ENCODE measurements at regions of chr3 and their contacts with region 1.

Region 1: GRCh38 chr3:10964537-10965167 is 27.9 kb upstream of the SLC6A1 start:
- DNase-seq: no peak
- H3K4me3 ChIP-seq: no peak overlapping the region
- CTCF ChIP-seq: no peak
- POLR2A ChIP-seq: no peak

Region 2: DNA sequence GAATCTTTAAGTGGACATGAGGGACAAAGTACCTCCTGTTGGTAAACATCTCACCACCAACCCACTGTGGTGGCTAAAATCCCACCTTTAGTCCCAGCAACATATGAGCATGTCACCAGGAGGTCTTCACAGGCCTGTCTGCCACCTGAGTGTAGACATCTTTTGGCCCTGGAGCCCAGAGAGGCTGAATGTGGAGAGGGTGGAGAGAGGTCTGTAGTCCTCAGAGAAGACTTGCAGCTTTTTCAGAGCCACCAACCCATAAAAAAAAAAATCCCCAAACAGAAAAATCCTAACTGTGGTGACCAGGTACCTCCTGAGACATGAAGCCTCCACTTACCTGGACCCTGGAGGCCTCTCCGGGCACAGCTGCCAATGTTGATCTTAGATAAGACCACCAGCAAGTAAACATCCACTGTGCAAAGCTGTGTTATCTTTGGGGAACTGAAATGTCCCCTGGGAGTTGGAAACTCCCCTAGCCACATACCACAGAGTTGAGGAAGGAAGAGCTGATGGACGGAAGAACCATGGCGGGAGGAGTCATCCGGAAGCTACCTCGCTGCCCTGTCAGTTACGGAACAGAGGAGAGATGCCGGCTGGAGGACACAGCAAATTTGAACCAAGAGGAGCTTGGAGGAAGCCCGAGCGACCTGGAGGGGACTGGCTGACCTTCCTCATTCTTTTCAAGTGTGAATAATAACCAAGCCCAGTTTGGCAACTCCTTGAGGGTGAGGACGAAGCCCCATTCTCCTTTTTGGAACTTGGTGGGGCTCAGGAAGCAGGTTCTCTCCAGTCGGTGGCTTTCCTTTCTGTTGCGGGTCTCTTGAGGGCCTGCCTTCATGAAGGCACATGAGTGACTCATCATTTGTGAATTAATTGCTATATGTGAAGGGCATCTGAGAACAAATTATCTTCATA is 671.9 kb before region 1 on chr3 and contains the start of gene GHRL:
- intact Hi-C with region 1: loop called (anchors 5 kb)
- DNase-seq: no peak
- H3K4me3 ChIP-seq: no peak within 1 kb of the TSS
- CTCF ChIP-seq: no peak
- POLR2A ChIP-seq: no peak
- total RNA-seq, gene GHRL: not detected

Measured in lower leg skin (tissue), 4 donors.